ENCODE measurements at regions of chr9 and their contacts with region 1.

Region 1: GRCh38 chr9:87324613-87325194 is 173.0 kb upstream of the DAPK1 start:
- DNase-seq: peak; percentile 44 to 54 (median 52)
- ATAC-seq: peak; percentile 71
- H3K4me3 ChIP-seq: no peak overlapping the region
- H3K27ac ChIP-seq: no peak overlapping the region
- H3K4me1 ChIP-seq: no peaks in the 10 kb centered on the region
- H3K27me3 ChIP-seq: peaks cover 0 to 7% of the 10 kb centered on the region in 2 experiments; a peak in 2 of 5 replicates
- CTCF ChIP-seq: peak; percentile 47 to 73 (median 55); a peak in 5 of 6 replicates
- EP300 ChIP-seq: no peak
- POLR2A ChIP-seq: no peak
- RAD21 ChIP-seq: peak; percentile 79 to 87

Region 2: GRCh38 chr9:86413966-86414880 is 910.5 kb before region 1 on chr9:
- CTCF ChIA-PET with region 1: interaction called, 10 read pairs
- POLR2A ChIA-PET with region 1: no interaction called
- in situ Hi-C with region 1: no loop called
- intact Hi-C with region 1: loop called (anchors 5 kb)
- DNase-seq: peak; percentile 5 to 15 (median 11)
- ATAC-seq: 0 out of 3 replicates have a peak, but pooled peaks have one; percentile 48
- H3K4me3 ChIP-seq: no peak overlapping the region
- H3K27ac ChIP-seq: no peak overlapping the region
- H3K4me1 ChIP-seq: no peaks in the 10 kb centered on the region
- H3K27me3 ChIP-seq: no peaks in the 10 kb centered on the region; a peak in 2 of 5 replicates
- CTCF ChIP-seq: peak; percentile 29 to 56 (median 33); a peak in 4 of 6 replicates
- EP300 ChIP-seq: no peak
- POLR2A ChIP-seq: no peak
- RAD21 ChIP-seq: peak; percentile 35 to 59; a peak in 3 of 4 replicates

Region 3: GRCh38 chr9:86486891-86487837 is 837.5 kb before region 1 on chr9:
- CTCF ChIA-PET with region 1: interaction called, 5 read pairs
- POLR2A ChIA-PET with region 1: no interaction called
- in situ Hi-C with region 1: loop called (anchors 10 kb)
- intact Hi-C with region 1: loop called (anchors 1 kb)
- DNase-seq: peak; percentile 6 to 27 (median 18)
- ATAC-seq: 0 out of 3 replicates have a peak, but pooled peaks have one; percentile 48
- H3K4me3 ChIP-seq: no peak overlapping the region
- H3K27ac ChIP-seq: no peak overlapping the region
- H3K4me1 ChIP-seq: no peaks in the 10 kb centered on the region
- H3K27me3 ChIP-seq: no peaks in the 10 kb centered on the region
- CTCF ChIP-seq: peak in 2 of 3 experiments; percentile 32 to 58; a peak in 2 of 6 replicates
- EP300 ChIP-seq: no peak
- POLR2A ChIP-seq: no peak
- RAD21 ChIP-seq: peak; percentile 39 to 63; a peak in 3 of 4 replicates

Region 4: DNA sequence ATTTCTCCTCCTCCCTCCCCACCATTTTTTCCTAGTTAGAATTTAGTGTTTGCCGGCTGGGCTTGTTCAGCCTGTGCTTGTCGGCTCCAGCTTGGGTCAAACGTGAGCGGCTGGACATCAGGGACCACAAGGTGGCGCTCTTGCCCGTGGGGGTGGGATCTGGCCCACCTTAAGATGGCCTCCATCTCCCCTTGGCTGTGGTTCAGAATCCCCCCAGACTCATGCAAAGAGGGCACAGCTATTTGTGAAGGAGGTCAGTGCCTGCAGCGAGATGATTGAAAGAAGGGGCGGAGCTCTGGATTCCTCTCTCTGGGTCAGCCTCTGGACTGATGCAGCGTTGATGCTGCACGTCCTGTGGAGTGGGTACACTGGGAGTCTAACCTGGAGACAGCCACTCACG is 687.2 kb before region 1 on chr9:
- CTCF ChIA-PET with region 1: no interaction called
- POLR2A ChIA-PET with region 1: no interaction called
- in situ Hi-C with region 1: no loop called
- intact Hi-C with region 1: loop called (anchors 5 kb)
- DNase-seq: peak; percentile 33 to 45 (median 40)
- ATAC-seq: peak; percentile 89
- H3K4me3 ChIP-seq: no peak overlapping the region
- H3K27ac ChIP-seq: no peak overlapping the region
- H3K4me1 ChIP-seq: peaks cover 0 to 10% of the 10 kb centered on the region in 2 experiments; a peak in 3 of 5 replicates
- H3K27me3 ChIP-seq: no peaks in the 10 kb centered on the region
- CTCF ChIP-seq: peak; percentile 48 to 77 (median 48)
- EP300 ChIP-seq: no peak
- POLR2A ChIP-seq: no peak
- RAD21 ChIP-seq: peak in 1 of 2 experiments; percentile 44; a peak in 2 of 4 replicates

Region 5: DNA sequence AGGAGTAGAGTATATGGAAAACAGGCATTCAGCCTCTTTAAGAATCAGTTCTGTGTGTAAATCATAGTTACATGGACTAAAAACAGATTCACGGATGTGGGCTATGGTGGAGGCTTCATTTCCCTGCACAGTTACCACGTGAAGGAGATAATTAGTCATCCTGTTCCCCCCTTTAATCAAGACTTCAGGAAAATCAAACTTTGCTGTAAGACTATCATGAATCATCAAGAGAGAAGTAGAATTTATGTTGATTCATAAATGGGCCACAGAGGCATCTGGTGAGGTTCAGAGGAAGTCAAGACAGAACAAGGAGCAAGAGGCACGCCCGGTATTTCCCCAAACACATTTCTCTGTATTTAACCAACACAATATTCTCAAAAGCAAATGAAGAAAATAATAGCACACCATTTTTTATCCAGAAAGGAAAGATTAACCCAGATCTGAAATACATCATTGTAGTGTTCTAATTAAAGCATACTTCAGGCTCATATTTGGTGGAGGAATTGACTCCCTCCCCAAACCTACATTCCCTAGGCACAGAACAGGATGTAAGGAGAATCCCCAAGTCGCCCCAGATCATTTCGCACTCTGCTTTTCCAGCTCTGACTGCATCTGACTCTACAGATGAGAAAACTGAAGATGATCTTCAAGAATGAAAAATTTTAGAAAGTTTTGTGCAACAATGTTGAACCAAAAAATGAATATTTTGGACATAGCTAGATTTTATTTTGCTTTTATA is 201.6 kb before region 1 on chr9:
- CTCF ChIA-PET with region 1: no interaction called
- POLR2A ChIA-PET with region 1: no interaction called
- in situ Hi-C with region 1: no loop called
- intact Hi-C with region 1: no loop called
- DNase-seq: no peak
- ATAC-seq: no peak
- H3K4me3 ChIP-seq: no peak overlapping the region
- H3K27ac ChIP-seq: no peak overlapping the region
- H3K4me1 ChIP-seq: no peaks in the 10 kb centered on the region
- H3K27me3 ChIP-seq: no peaks in the 10 kb centered on the region; a peak in 1 of 5 replicates
- CTCF ChIP-seq: no peak
- EP300 ChIP-seq: no peak
- POLR2A ChIP-seq: no peak
- RAD21 ChIP-seq: no peak